Right cardiac atrium (tissue), 5 donors: ENCODE measurements at regions of chr4 and their contacts with region 1.

Region 1: GRCh38 chr4:121484633-121485032 is 103.8 kb upstream of the QRFPR start:
- DNase-seq: peak in 2 of 3 donors; percentile 12 to 55
- ATAC-seq: peak; percentile 67 to 82
- H3K4me3 ChIP-seq: no peak overlapping the region
- H3K27ac ChIP-seq: no peak overlapping the region
- H3K4me1 ChIP-seq: no peaks in the 10 kb centered on the region
- H3K27me3 ChIP-seq: no peaks in the 10 kb centered on the region

Region 2: GRCh38 chr4:121642292-121642691 is 157.7 kb after region 1 on chr4:
- intact Hi-C with region 1: no loop called
- DNase-seq: no peak
- ATAC-seq: no peak
- H3K4me3 ChIP-seq: no peak overlapping the region
- H3K27ac ChIP-seq: no peak overlapping the region
- H3K4me1 ChIP-seq: no peaks in the 10 kb centered on the region
- H3K27me3 ChIP-seq: no peaks in the 10 kb centered on the region

Region 3: GRCh38 chr4:121656269-121656641 is 171.6 kb after region 1 on chr4:
- intact Hi-C with region 1: loop called in 2 of 4 experiments (anchors 10 kb)
- DNase-seq: peak; percentile 30 to 68 (median 65)
- ATAC-seq: peak; percentile 67 to 85
- H3K4me3 ChIP-seq: no peak overlapping the region
- H3K27ac ChIP-seq: no peak overlapping the region
- H3K4me1 ChIP-seq: no peaks in the 10 kb centered on the region
- H3K27me3 ChIP-seq: no peaks in the 10 kb centered on the region

Region 4: GRCh38 chr4:121736735-121737351 is 252.2 kb after region 1 on chr4:
- intact Hi-C with region 1: loop called in 1 of 4 experiments (anchors 10 kb)
- DNase-seq: no peak
- ATAC-seq: peak; percentile 16 to 39
- H3K4me3 ChIP-seq: no peak overlapping the region
- H3K27ac ChIP-seq: no peak overlapping the region
- H3K4me1 ChIP-seq: no peaks in the 10 kb centered on the region
- H3K27me3 ChIP-seq: no peaks in the 10 kb centered on the region